MCF 10A (cell line): ENCODE measurements at regions of chr13 and their contacts with region 1.

Region 1: GRCh38 chr13:27362064-27362883 is 62.1 kb upstream of the GTF3A start:
- DNase-seq: peak; percentile 79
- H3K4me3 Mint-ChIP-seq: peak overlapping the region; percentile 49
- H3K27ac Mint-ChIP-seq: peak overlapping the region; percentile 49
- H3K4me1 Mint-ChIP-seq: no peaks in the 10 kb centered on the region
- H3K27me3 Mint-ChIP-seq: peaks cover 6% of the 10 kb centered on the region
- CTCF ChIP-seq: peak; percentile 92

Region 2: DNA sequence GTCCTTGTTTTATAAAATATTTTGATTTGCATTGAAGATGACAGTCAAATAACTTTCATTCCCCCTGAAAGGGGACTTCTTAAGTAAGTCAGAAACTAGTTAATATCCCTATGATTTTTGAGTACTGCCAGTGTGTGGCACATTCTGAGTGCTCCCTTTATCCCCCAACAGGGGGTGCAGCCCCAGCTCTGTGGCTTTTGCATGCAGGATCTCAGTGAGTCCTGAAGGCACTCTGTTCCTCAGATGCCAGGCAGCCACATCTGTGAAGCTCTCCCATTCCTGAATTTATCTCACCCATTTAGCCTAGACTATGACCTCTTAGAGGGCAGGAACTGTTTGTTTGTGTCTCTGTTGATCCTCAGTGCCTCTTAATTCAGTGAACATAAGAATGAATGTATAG is 985.2 kb before region 1 on chr13:
- CTCF ChIA-PET with region 1: no interaction called
- POLR2A ChIA-PET with region 1: no interaction called
- intact Hi-C with region 1: no loop called
- DNase-seq: peak; percentile 42
- H3K4me3 Mint-ChIP-seq: no peak overlapping the region
- H3K27ac Mint-ChIP-seq: no peak overlapping the region
- H3K4me1 Mint-ChIP-seq: peaks cover 4% of the 10 kb centered on the region
- H3K27me3 Mint-ChIP-seq: no peaks in the 10 kb centered on the region
- CTCF ChIP-seq: peak; percentile 10

Region 3: DNA sequence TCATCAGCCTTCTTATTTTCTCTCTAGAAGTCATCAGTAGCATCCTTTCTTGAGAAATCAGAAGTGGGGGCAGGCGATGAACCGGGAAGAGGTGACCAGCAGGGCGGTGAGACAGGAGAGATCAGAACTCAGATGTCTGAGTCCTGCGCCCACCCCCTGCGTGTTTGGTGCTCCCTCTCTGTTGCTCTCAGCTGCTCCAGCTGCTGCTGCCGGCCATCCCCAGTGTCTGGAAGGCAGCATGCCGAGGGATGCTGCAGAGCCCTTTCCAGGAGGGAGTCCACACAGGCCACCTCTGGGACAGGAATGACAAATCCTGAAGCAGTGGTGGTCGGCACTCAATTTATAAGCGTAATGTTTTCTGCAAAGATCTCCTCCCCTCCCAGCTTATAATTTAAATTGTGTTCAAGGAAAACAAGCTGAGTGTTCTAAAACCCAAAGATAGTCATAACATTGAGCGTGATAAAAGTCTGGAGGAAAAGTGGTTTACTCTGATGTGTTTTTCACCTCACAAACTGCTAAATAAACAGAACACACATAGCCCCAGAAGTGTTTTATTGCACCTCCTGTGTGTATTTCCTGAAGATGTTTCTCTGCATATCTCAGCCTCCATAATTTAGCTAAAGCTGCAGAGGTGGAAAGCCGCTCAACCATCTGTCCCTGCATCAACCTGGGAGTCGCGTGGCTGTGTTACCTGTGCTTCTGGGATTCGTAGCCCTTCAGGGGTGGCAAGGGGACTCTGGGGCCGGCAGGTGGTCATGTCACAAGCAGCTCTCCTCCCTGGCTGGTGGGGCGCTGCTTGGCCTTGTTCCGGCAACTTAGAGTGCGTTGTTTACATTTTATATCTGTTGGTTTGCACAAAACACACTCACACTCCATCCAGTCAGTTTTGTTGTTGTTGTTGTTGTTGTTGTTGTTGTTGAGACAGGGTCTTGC is 381.9 kb before region 1 on chr13:
- CTCF ChIA-PET with region 1: interaction called, 177 read pairs
- POLR2A ChIA-PET with region 1: interaction called, 6 read pairs
- intact Hi-C with region 1: loop called (anchors 1 kb)
- DNase-seq: no peak
- H3K4me3 Mint-ChIP-seq: no peak overlapping the region
- H3K27ac Mint-ChIP-seq: no peak overlapping the region
- H3K4me1 Mint-ChIP-seq: peaks cover 18% of the 10 kb centered on the region
- H3K27me3 Mint-ChIP-seq: no peaks in the 10 kb centered on the region
- CTCF ChIP-seq: no peak

Region 4: DNA sequence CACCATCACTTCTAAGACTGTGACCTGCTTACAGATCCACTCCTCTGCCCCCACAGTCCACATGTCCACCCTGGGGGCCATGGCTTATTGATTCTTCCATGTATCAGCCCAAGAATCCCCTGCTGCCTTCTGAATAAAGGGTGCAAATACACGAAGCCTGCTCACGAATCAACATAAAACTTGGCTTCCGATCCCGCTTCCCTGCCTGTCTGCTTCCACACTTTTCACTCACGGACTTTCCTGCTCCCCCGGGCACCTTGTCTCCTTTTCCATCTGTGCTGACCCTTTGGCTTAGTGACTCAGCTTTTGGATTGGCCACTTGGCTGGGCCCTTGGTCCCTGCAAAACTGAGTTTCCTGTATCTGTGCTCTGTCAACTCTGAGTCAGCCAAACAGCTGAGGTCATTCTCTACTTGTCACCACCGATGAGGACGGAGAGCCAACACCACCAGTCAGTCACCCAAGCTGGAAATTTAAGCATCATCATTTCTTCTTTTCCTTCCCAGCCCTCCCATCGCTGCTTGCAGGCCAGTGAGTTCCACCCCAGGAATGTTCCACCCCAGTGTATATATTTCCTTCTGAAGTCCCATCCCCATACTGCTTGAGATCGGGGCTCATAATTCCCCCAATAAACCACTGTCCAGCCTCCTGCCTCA is 179.3 kb before region 1 on chr13:
- CTCF ChIA-PET with region 1: no interaction called
- POLR2A ChIA-PET with region 1: no interaction called
- intact Hi-C with region 1: no loop called
- DNase-seq: peak; percentile 63
- H3K4me3 Mint-ChIP-seq: no peak overlapping the region
- H3K27ac Mint-ChIP-seq: no peak overlapping the region
- H3K4me1 Mint-ChIP-seq: peaks cover 15% of the 10 kb centered on the region
- H3K27me3 Mint-ChIP-seq: no peaks in the 10 kb centered on the region
- CTCF ChIP-seq: no peak

Region 5: DNA sequence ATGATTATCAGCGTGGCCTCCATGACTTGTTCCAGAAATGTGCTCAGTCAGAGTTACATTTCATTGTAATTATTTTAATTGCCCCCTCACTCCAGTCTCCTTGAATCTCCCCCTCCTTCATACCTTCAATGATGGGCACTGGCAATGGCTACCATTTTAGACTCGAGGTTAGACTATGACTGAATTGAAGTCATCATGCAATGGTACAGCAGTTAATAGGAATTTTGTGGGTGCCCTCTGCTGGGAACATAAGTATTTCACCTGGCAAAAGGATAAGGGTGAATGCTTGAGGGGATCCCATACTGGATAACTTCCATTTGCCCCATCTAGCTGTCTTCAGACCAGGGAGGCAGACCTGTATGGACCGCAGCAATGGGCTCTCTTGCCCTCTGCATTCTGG is 158.4 kb before region 1 on chr13:
- CTCF ChIA-PET with region 1: interaction called, 5 read pairs
- POLR2A ChIA-PET with region 1: no interaction called
- intact Hi-C with region 1: loop called (anchors 10 kb)
- DNase-seq: peak; percentile 44
- H3K4me3 Mint-ChIP-seq: no peak overlapping the region
- H3K27ac Mint-ChIP-seq: no peak overlapping the region
- H3K4me1 Mint-ChIP-seq: no peaks in the 10 kb centered on the region
- H3K27me3 Mint-ChIP-seq: no peaks in the 10 kb centered on the region
- CTCF ChIP-seq: no peak

Region 6: GRCh38 chr13:27270594-27271520 is 91.4 kb before region 1 on chr13 and contains the start of gene RASL11A:
- CTCF ChIA-PET with region 1: interaction called, 5 read pairs
- POLR2A ChIA-PET with region 1: no interaction called
- intact Hi-C with region 1: loop called (anchors 1 kb)
- DNase-seq: peak; percentile 81
- H3K4me3 Mint-ChIP-seq: peak within 1 kb of the TSS; percentile 72
- H3K27ac Mint-ChIP-seq: no peak within 1 kb of the TSS
- H3K4me1 Mint-ChIP-seq: peaks cover 9% of the 10 kb centered on the region
- H3K27me3 Mint-ChIP-seq: no peaks in the 10 kb centered on the region
- CTCF ChIP-seq: peak; percentile 94
- total RNA-seq, gene RASL11A: 0.71 and 0.98 TPM in 2 replicates

Region 7: DNA sequence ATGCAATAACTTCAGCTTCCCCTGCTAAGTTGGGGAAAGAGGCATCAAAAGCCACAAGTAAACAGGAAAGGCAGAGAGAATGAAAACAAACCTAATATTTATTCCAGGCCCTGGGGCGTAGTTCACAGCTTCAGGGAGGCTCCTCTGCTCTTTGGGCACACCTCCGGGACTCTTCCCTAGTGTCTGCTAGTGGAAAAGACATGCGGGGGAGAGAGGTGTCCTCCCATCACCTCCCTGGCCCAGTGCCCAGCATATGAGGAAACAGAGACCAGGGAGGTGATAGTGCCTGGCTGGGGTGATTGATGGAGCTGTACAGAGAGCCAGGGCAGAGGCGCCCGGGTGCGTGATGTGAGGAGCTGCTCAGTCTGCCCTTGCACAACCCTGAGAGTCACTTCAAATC is 20.7 kb before region 1 on chr13:
- CTCF ChIA-PET with region 1: interaction called, 57 read pairs
- POLR2A ChIA-PET with region 1: interaction called, 3 read pairs
- intact Hi-C with region 1: no loop called
- DNase-seq: peak; percentile 69
- H3K4me3 Mint-ChIP-seq: no peak overlapping the region
- H3K27ac Mint-ChIP-seq: peak overlapping the region; percentile 30
- H3K4me1 Mint-ChIP-seq: peaks cover 16% of the 10 kb centered on the region
- H3K27me3 Mint-ChIP-seq: peaks cover 18% of the 10 kb centered on the region
- CTCF ChIP-seq: no peak

Region 8: GRCh38 chr13:27980280-27980998 is 618.2 kb after region 1 on chr13:
- CTCF ChIA-PET with region 1: interaction called, 74 read pairs
- POLR2A ChIA-PET with region 1: interaction called, 6 read pairs
- intact Hi-C with region 1: loop called (anchors 1 kb)
- DNase-seq: no peak
- H3K4me3 Mint-ChIP-seq: no peak overlapping the region
- H3K27ac Mint-ChIP-seq: no peak overlapping the region
- H3K4me1 Mint-ChIP-seq: peaks cover 7% of the 10 kb centered on the region
- H3K27me3 Mint-ChIP-seq: peaks cover 77% of the 10 kb centered on the region
- CTCF ChIP-seq: no peak

Region 9: DNA sequence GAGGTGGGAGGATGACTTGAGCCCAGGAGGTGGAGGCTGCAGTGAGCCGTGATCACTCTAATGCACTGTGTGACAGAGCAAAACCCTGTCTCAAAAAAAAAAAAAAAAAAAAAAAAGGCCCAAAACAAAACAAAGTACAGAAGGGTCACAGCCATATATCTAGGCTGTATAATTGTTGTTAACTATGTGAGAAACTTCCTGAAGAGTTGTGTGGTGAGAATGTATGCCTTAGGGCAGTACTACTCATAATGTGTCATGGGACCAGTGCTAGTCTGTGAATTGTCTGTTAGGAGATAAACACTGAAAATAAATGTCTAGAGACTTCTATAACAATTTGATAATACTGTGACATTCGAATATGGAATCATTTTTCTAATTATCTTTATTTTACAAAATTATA is 819.1 kb after region 1 on chr13:
- CTCF ChIA-PET with region 1: no interaction called
- POLR2A ChIA-PET with region 1: no interaction called
- intact Hi-C with region 1: no loop called
- DNase-seq: peak; percentile 67
- H3K4me3 Mint-ChIP-seq: no peak overlapping the region
- H3K27ac Mint-ChIP-seq: peak overlapping the region; percentile 82
- H3K4me1 Mint-ChIP-seq: peaks cover 15% of the 10 kb centered on the region
- H3K27me3 Mint-ChIP-seq: no peaks in the 10 kb centered on the region
- CTCF ChIP-seq: no peak

Region 10: DNA sequence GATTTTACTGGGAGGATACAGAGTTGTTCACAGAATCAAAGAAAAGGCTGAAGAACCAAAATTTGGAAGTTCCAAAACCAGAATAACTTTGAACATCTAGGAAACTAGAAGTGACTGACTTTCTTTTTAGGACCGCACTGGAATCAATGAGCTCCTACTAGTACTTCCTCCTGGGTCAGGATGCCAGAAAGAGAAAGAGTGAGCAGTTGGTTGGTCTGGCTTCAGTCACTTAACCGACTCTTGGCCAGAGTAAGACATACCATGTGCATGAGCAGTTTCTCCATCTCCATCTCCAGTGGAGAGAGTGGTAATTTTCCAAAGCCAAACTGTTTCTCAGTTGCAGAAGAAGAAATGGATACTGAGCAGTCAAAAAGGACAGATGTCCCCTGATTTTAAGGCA is 1430.7 kb after region 1 on chr13:
- CTCF ChIA-PET with region 1: no interaction called
- POLR2A ChIA-PET with region 1: no interaction called
- intact Hi-C with region 1: loop called (anchors 5 kb)
- DNase-seq: no peak
- H3K4me3 Mint-ChIP-seq: no peak overlapping the region
- H3K27ac Mint-ChIP-seq: no peak overlapping the region
- H3K4me1 Mint-ChIP-seq: no peaks in the 10 kb centered on the region
- H3K27me3 Mint-ChIP-seq: peaks cover 28% of the 10 kb centered on the region
- CTCF ChIP-seq: no peak